Activated CD4-positive, alpha-beta T cell treated with anti-CD3 and anti-CD28 coated beads, Interleukin-2, amount 10 ng/mL, durations not matched to agents 7 days and 5 days (primary cell): ENCODE measurements at regions of chr9 and their contacts with region 1.

Region 1: DNA sequence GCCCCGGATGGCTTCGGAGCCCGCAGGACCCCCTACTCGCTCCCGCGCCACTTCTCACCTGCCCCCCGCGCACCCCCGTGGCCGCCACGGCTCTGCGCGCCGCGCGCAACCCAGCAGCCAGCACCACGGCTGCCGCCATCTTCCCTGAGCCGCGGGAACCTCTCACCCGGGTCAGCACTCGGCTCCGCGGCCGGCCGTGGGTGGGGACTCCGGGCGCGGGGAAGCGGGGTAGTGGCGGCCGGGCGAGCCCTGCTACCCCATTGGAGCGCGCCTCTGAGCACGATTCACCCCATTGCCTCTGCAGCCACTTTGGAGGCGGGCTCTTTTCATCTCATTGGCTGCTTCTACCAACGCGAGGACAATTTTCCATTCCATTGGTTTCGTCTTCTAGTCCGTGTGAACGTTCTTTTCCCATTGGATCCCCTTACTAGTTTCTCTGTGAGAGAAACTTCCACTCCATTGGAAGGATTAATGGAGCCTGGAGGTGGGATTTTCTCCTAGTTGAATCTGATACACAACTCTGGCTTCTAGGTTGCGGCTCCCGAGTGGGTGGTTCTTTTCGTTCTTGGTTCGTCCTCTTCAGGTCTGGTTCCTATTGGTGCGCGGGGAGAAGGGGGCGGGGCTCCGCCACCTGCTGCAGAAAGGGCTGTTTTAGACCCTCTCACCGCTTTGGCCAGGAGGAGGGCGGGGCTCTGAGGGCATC is at the start of gene HINT2:
- DNase-seq: peak; percentile 99
- H3K4me3 Mint-ChIP-seq: peak within 1 kb of the TSS; percentile 86
- H3K27ac Mint-ChIP-seq: peak within 1 kb of the TSS; percentile 95
- H3K4me1 Mint-ChIP-seq: peaks cover 43% of the 10 kb centered on the region
- H3K27me3 Mint-ChIP-seq: peaks cover 13% of the 10 kb centered on the region
- total RNA-seq, gene HINT2: 56.5 to 69.9 TPM

Region 2: DNA sequence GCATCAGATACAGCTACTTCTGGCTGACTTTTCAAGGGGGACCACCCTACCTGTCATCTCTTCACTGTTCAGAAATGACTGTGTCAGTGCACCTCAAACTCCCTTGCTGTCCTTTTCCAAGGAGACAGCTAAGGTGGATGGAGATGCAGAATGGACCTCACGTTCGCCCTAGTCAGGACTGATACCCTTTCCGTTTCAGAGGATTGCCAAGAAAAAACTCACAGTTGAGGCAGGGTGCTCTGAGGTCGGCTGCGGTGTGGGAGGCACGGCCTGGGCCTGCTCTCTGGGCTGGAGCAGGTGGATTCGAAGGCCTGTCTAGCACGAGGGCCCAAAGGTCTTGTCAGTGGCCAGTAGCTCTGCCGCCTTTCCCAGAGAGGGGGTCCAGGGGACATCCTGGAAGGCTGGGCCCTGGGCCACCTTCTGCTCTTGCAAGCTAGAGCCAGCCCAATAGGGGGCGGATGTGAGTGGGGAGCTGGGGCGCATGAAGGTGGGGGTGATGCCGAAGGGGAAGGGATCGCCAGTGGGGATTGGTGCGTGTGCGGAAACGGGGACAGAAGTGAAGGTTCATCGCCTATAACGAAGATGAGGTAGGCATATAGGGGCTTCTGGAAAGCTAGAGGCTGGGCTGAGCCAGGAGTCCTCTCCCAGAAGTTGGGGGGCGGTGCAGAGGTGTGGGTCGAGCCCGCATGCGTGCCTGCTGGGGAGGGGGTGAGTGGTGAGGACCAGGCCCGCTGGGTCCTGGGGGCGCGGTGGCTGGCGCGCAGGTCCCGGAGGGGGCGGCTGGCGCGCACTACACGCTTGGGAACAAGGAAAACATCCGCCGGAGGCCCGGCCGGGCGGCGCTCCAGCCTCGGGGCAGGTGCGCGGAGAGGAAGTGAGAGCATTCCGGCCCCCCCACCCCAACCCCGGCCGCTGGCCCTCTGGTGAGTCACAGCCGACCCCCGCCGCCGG is 58.4 kb before region 1 on chr9:
- CTCF ChIA-PET with region 1: interaction called, 10 read pairs
- POLR2A ChIA-PET with region 1: no interaction called
- DNase-seq: peak; percentile 83
- H3K4me3 Mint-ChIP-seq: peak overlapping the region; percentile 91
- H3K27ac Mint-ChIP-seq: peak overlapping the region; percentile 94
- H3K4me1 Mint-ChIP-seq: peaks cover 45% of the 10 kb centered on the region
- H3K27me3 Mint-ChIP-seq: no peaks in the 10 kb centered on the region

Region 3: GRCh38 chr9:35798658-35799374 is 16.2 kb before region 1 on chr9:
- CTCF ChIA-PET with region 1: interaction called, 34 read pairs
- POLR2A ChIA-PET with region 1: no interaction called
- DNase-seq: no peak
- H3K4me3 Mint-ChIP-seq: no peak overlapping the region
- H3K27ac Mint-ChIP-seq: no peak overlapping the region
- H3K4me1 Mint-ChIP-seq: peaks cover 28% of the 10 kb centered on the region
- H3K27me3 Mint-ChIP-seq: no peaks in the 10 kb centered on the region